ENCODE measurements at regions of chr7 and their contacts with region 1.

Region 1: DNA sequence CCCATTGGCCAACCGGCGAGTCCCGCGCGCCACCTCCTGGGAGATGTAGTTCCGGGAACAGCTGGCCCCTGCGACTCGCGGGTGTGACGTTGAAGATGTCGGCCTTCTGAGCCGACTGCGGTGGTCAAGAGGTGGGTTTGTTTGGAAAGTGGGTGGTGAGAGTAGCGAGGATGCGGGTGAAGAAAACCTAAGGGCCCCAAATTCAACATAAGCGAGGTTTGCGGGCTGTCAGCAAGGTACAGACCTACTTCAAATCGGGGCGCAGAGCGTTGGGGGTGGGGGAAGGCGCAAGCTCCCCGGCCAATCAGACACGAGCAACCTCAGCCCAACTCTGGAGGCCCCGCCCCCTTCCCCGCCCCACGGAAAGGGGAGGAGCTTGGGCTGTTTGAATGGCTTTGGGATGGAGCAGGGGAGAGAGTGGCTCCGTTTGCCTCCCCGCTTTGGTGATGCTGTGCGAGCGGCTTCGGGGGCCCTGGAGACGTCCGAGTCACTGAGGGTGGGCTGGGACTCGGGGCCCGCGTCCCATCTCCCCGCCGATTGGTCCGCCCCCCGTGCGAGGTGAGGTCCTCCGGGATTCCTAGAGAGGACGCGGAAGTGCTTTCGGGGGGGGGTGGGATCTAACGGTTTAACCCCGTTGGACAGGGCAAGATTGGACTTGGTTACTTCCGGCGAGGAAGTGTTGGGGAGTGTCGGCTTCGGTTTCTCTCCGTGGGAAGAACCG is at the start of gene ZKSCAN5:
- DNase-seq: peak; percentile 95
- H3K4me3 ChIP-seq: peak within 1 kb of the TSS; percentile 62 to 98
- H3K27ac ChIP-seq: peak within 1 kb of the TSS; percentile 89 to 91
- H3K4me1 ChIP-seq: peaks cover 4 to 10% of the 10 kb centered on the region in 2 experiments; a peak in 2 of 4 replicates
- H3K27me3 ChIP-seq: no peaks in the 10 kb centered on the region
- CTCF ChIP-seq: no peak
- EP300 ChIP-seq: no peak
- RAD21 ChIP-seq: no peak
- polyA plus RNA-seq, gene ZKSCAN5: 7.5 and 9.1 TPM in 2 replicates

Region 2: DNA sequence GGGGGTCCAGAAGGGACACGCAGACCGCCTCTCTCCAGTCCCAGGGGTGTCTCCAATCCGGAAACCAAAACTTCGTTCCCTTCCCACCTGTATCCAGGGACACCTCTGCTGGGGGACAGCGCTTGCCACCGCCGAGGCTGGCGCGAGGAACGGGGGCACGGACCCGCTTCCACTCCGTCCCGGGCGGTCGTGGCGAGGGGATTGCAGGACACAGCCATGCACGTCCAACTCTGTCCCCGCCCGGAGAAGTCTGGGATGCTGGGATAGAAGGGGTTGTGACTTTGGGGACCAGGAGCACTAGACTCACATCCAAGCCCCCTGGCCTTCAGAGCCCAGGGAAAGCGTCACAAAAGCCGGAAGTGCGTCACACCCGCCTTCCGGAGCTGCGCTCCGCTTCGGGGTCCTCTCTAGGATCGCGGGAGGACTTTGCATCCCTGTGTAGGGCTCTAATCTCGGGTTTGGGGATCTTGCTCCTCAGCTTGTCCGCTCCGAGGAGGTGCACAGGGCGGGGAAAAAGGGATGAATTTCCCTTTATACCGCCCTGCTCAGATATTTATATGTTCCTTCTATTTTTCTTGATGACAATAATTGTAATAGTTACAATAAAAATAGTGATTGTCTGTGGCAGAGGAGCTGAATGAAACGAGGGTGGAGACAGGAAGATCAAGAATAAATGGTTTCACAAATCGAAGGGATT is 47.2 kb after region 1 on chr7 and contains the start of gene FAM200A:
- CTCF ChIA-PET with region 1: no interaction called
- POLR2A ChIA-PET with region 1: interaction called, 13 read pairs
- DNase-seq: peak; percentile 98
- H3K4me3 ChIP-seq: peak within 1 kb of the TSS; percentile 95 to 96
- H3K27ac ChIP-seq: peak within 1 kb of the TSS; percentile 79 to 88
- H3K4me1 ChIP-seq: peaks cover 4 to 15% of the 10 kb centered on the region in 2 experiments; a peak in 2 of 4 replicates
- H3K27me3 ChIP-seq: no peaks in the 10 kb centered on the region
- CTCF ChIP-seq: no peak
- EP300 ChIP-seq: peak; percentile 9 to 53; a peak in 2 of 4 replicates
- RAD21 ChIP-seq: no peak
- polyA plus RNA-seq, gene FAM200A: 6.2 and 8.2 TPM in 2 replicates

Region 3: GRCh38 chr7:99558306-99559174 is 53.8 kb after region 1 on chr7 and contains the start of gene ZNF655:
- CTCF ChIA-PET with region 1: no interaction called
- POLR2A ChIA-PET with region 1: interaction called, 14 read pairs
- DNase-seq: peak; percentile 100
- H3K4me3 ChIP-seq: peak within 1 kb of the TSS; percentile 88 to 98
- H3K27ac ChIP-seq: peak within 1 kb of the TSS; percentile 97 to 99
- H3K4me1 ChIP-seq: peaks cover 20 to 34% of the 10 kb centered on the region in 2 experiments
- H3K27me3 ChIP-seq: no peaks in the 10 kb centered on the region
- CTCF ChIP-seq: no peak
- EP300 ChIP-seq: peak; percentile 17 to 65; a peak in 2 of 4 replicates
- RAD21 ChIP-seq: no peak
- polyA plus RNA-seq, gene ZNF655: 113 and 144 TPM in 2 replicates